Left cardiac atrium (tissue), 4 donors: ENCODE measurements at regions of chr6 and their contacts with region 1.

Region 1: GRCh38 chr6:111478749-111479148 is 4.3 kb downstream of the REV3L start:
- DNase-seq: no peak
- ATAC-seq: no peak

Region 2: DNA sequence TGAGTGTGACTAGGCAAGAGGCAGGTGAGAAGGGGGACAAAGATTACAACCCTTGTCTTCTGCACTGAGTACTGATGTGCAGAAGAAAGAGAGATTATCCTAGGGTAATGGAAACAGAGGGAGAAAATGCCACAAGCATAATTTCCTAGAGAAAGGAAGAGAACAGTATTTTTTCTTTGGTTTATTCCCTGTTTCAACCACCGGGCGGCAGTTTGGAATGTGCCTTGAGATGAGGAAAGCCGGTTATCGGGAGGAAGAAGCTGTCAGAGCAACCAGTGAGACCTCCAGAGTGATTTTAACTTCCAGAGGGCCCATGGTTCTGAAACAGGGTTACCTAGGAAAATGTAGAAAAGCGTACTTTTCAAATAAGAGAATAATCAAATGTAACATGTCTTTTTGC is 117.1 kb before region 1 on chr6:
- intact Hi-C with region 1: loop called in 1 of 2 experiments (anchors 5 kb)
- DNase-seq: peak; percentile 42
- ATAC-seq: peak; percentile 47 to 68

Region 3: DNA sequence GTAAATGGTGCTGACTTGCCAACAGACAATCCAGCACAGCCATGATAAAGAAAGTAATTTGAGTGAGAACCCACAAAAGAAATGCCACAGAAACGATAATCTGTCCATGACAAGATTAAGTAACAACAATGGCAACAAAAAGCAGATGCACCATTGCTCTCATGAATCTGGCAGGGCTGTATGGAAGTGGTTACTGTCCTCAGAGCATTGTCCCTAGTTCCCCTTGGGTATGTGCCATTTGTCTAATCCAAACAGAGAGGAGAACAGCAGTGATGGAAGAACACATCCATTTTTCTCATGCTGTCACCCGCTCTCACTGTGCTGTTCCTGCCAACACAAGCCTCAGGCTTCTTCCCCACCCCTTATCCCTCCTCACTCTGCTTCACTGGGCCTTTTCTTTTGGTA is 61.6 kb before region 1 on chr6:
- intact Hi-C with region 1: loop called in 1 of 2 experiments (anchors 5 kb)
- DNase-seq: no peak
- ATAC-seq: peak; percentile 90 to 92

Region 4: GRCh38 chr6:111918825-111919224 is 440.1 kb after region 1 on chr6:
- intact Hi-C with region 1: no loop called
- DNase-seq: peak; percentile 27
- ATAC-seq: peak; percentile 23 to 94